ENCODE measurements at regions of chr11 and their contacts with region 1.

Region 1: DNA sequence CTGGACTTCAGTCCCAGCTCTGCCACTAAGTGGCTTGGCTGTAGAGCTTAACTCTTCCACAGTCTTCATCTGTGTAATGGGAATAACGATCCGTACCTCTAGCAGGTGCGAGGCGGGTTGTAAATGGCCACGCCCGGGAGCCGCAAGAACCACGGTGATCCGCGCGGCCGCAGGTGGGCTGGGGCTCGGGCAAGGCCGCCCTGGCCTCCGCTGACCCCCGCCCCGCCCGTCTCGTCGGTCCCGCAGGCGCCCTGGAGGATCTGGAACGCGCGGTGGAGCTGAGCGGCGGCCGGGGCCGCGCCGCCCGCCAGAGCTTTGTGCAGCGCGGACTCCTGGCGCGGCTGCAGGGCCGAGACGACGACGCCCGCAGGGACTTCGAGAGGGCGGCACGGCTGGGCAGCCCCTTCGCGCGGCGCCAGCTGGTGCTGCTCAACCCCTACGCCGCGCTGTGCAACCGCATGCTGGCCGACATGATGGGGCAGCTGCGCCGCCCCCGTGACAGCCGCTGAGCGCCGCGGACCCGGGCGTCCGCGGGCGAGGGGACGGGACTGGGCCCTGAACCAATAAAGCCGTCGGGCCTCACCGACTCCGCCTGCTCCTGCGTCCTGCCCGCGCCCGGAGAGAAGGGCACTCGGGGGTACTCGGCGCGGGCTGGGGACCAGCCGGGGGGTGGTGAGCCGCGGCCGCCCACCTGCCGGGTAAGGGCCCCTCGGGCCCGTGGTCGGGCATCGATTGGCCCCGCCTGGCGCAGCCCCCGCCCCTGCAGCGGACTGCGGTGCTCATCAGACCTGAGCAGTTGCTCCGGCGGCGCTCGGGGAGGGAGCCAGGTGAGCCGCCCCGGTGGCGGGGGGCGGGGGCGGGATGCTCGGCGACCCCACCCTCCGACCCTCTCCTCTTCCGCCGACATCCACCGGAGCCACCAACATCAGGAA is at the start of gene TMEM25:
- DNase-seq: peak; percentile 73 to 82
- ATAC-seq: peak; percentile 82 to 90 (median 84)
- H3K4me3 ChIP-seq: peak within 1 kb of the TSS; percentile 91
- H3K27ac ChIP-seq: peak within 1 kb of the TSS; percentile 80
- H3K4me1 ChIP-seq: peaks cover 9% of the 10 kb centered on the region
- H3K27me3 ChIP-seq: no peaks in the 10 kb centered on the region
- CTCF ChIP-seq: no peak
- total RNA-seq, gene TMEM25: 6.3 to 14.7 (median 8.7) TPM

Region 2: DNA sequence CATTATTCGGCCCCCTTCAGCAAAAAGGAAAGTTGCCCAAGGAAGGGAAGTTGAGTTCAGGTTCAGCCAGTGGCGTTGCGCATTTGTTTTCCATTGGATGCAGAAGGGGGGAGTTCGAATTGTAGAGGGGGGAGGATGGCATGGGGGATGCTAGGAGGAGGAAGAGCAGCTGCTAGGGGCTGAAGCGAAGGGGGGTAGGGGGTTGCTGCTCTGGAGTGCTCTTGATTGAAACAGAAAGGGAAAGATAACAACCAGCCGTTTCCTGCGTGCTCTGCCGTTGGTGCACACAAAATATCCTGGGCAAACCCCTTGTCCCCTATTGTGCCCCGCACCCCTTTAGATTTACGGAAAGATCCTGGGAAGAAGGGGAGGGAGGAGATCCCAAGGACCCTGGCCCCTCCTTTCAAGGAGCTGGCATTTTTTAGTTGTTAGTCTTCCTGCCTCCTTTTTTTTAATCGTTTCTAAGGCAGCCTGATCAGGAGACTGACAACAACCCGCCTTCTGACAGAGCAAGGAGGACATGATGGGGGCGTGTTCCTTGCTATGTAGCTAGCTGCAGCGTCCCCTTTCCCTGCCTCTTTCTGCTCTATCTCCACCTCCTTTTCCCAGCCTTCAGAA is 92.3 kb before region 1 on chr11:
- intact Hi-C with region 1: no loop called
- DNase-seq: peak in 1 of 2 donors; percentile 14
- ATAC-seq: no peak
- H3K4me3 ChIP-seq: peak overlapping the region; percentile 97
- H3K27ac ChIP-seq: peak overlapping the region; percentile 80
- H3K4me1 ChIP-seq: peaks cover 57% of the 10 kb centered on the region
- H3K27me3 ChIP-seq: no peaks in the 10 kb centered on the region
- CTCF ChIP-seq: no peak

Region 3: DNA sequence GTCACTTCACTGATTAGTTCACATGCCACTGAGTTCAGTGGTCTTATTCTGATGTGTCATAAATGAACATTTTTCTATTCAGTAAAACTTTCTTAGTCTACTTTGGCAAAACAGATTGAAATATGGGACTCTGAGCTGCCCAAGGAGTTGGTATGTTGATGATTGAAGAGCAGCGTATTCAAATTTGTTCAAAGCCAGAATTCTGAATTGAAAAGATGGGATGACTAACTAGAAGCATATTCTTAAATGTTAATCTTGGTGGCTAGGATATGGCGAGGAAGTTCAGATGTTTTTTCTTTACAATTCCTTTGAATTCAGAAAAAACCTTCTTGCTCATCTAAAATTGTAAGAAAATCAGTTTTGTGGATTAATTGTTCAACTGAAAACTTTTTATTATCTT is 59.6 kb before region 1 on chr11:
- intact Hi-C with region 1: no loop called
- DNase-seq: no peak
- ATAC-seq: no peak
- H3K4me3 ChIP-seq: no peak overlapping the region
- H3K27ac ChIP-seq: no peak overlapping the region
- H3K4me1 ChIP-seq: no peaks in the 10 kb centered on the region
- H3K27me3 ChIP-seq: no peaks in the 10 kb centered on the region
- CTCF ChIP-seq: no peak

Region 4: DNA sequence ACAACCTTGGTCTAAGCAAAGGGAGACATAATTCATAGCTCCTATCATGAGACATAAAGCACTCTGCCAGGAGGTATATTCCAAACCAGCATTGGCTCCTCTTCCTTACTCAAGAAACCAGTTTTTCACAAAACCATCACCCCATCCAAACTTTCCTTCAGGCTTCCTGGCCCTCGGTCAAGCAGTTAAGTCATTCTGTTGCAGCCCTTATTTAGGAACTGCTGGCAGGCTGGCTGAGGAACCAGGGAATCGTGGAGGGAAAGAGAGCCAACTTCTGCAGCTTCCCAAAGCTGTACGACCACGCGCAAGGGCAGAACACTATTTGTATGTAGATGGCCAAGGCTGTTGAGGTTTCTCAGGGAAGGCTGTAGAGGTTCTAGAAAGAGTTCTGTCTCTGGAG is 34.4 kb after region 1 on chr11:
- intact Hi-C with region 1: loop called (anchors 2 to 5 kb)
- DNase-seq: peak; percentile 25 to 55
- ATAC-seq: peak in 3 of 4 donors; percentile 11 to 32 (median 15)
- H3K4me3 ChIP-seq: peak overlapping the region; percentile 94
- H3K27ac ChIP-seq: no peak overlapping the region
- H3K4me1 ChIP-seq: peaks cover 6% of the 10 kb centered on the region
- H3K27me3 ChIP-seq: no peaks in the 10 kb centered on the region
- CTCF ChIP-seq: no peak

Region 5: DNA sequence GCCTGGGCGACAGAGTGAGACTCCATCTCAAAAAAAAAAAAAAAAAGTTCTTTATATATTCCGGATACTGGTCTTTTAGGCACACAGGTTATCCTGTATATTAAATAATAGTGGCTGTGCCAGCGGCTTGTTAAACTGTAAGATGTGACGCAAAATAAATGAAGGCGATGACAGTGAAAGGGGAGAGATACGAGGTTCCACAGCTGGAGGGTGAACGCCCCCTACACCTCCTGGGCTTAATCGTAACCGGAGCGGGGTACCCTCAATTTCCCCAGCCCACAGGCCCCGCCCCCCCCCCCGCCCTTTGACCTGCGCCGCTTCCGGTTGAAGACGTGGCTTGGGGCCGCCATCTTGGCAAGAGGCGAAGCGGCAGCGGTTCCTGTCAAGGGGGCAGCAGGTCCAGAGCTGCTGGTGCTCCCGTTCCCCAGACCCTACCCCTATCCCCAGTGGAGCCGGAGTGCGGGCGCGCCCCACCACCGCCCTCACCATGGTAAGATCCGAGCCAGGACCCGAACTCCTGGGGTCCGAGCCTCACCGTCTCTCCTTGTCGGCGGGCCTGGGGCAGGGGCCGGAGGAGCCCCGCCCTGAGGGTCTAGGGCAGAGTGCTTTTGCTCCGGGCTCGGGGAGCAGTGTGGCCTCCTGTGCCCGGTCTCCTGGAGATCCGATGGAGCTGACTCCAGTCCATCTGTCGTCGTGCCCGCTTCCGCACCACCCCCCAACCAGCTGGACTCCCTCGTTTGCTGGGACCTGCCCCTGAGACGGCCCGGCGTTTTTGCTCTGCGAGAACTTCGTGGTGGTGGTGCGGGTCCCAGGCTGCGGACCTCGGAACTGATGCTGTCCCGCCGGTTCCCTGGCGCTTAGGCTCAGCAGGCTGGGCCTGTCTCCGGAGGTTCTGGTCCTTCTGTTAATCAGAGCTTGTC is 41.6 kb after region 1 on chr11 and contains the start of gene ARCN1:
- intact Hi-C with region 1: loop called (anchors 2 to 5 kb)
- DNase-seq: peak; percentile 78 to 91
- ATAC-seq: peak; percentile 86 to 94 (median 88)
- H3K4me3 ChIP-seq: peak within 1 kb of the TSS; percentile 99
- H3K27ac ChIP-seq: peak within 1 kb of the TSS; percentile 100
- H3K4me1 ChIP-seq: peaks cover 44% of the 10 kb centered on the region
- H3K27me3 ChIP-seq: no peaks in the 10 kb centered on the region
- CTCF ChIP-seq: no peak
- total RNA-seq, gene ARCN1: 54.2 to 65.7 (median 60.1) TPM

Region 6: GRCh38 chr11:118592616-118593367 is 62.1 kb after region 1 on chr11:
- intact Hi-C with region 1: no loop called
- DNase-seq: no peak
- ATAC-seq: no peak
- H3K4me3 ChIP-seq: no peak overlapping the region
- H3K27ac ChIP-seq: peak overlapping the region; percentile 17
- H3K4me1 ChIP-seq: peaks cover 5% of the 10 kb centered on the region
- H3K27me3 ChIP-seq: no peaks in the 10 kb centered on the region
- CTCF ChIP-seq: no peak

Region 7: GRCh38 chr11:118640332-118641154 is 109.9 kb after region 1 on chr11:
- intact Hi-C with region 1: no loop called
- DNase-seq: no peak
- ATAC-seq: peak; percentile 29 to 49 (median 36)
- H3K4me3 ChIP-seq: no peak overlapping the region
- H3K27ac ChIP-seq: peak overlapping the region; percentile 15
- H3K4me1 ChIP-seq: peaks cover 35% of the 10 kb centered on the region
- H3K27me3 ChIP-seq: no peaks in the 10 kb centered on the region
- CTCF ChIP-seq: peak; percentile 44

Measured in psoas muscle (tissue), 8 donors.